ENCODE measurements at regions of chr1 and their contacts with region 1.

Region 1: GRCh38 chr1:11719313-11720032 is 16.5 kb upstream of the AGTRAP start:
- DNase-seq: peak; percentile 61
- ATAC-seq: peak; percentile 93
- H3K4me3 ChIP-seq: no peak overlapping the region
- H3K27ac ChIP-seq: no peak overlapping the region
- H3K4me1 ChIP-seq: no peaks in the 10 kb centered on the region
- H3K27me3 ChIP-seq: peaks cover 22% of the 10 kb centered on the region
- CTCF ChIP-seq: peak; percentile 87
- POLR2A ChIP-seq: no peak
- RAD21 ChIP-seq: peak; percentile 90

Region 2: GRCh38 chr1:11654939-11655808 is 64.3 kb before region 1 on chr1:
- CTCF ChIA-PET with region 1: interaction called, 9 read pairs
- POLR2A ChIA-PET with region 1: no interaction called
- dilution Hi-C with region 1: no loop called
- in situ Hi-C with region 1: loop called (anchors 5 kb)
- intact Hi-C with region 1: loop called (anchors 1 kb)
- DNase-seq: no peak
- ATAC-seq: peak; percentile 42
- H3K4me3 ChIP-seq: peak overlapping the region; percentile 89
- H3K27ac ChIP-seq: no peak overlapping the region; the same call in 1 of the 2 replicates
- H3K4me1 ChIP-seq: no peaks in the 10 kb centered on the region
- H3K27me3 ChIP-seq: peaks cover 6% of the 10 kb centered on the region; the same call in 1 of the 2 replicates
- CTCF ChIP-seq: no peak
- POLR2A ChIP-seq: no peak
- RAD21 ChIP-seq: no peak

Region 3: GRCh38 chr1:11661103-11661502 is 58.4 kb before region 1 on chr1:
- CTCF ChIA-PET with region 1: interaction called, 6 read pairs
- POLR2A ChIA-PET with region 1: no interaction called
- dilution Hi-C with region 1: no loop called
- in situ Hi-C with region 1: loop called (anchors 5 kb)
- intact Hi-C with region 1: loop called (anchors 1 kb)
- DNase-seq: no peak
- ATAC-seq: no peak
- H3K4me3 ChIP-seq: no peak overlapping the region
- H3K27ac ChIP-seq: no peak overlapping the region
- H3K4me1 ChIP-seq: no peaks in the 10 kb centered on the region
- H3K27me3 ChIP-seq: no peaks in the 10 kb centered on the region
- CTCF ChIP-seq: no peak
- POLR2A ChIP-seq: no peak
- RAD21 ChIP-seq: no peak